ENCODE measurements at regions of chr18 and their contacts with region 1.

Region 1: DNA sequence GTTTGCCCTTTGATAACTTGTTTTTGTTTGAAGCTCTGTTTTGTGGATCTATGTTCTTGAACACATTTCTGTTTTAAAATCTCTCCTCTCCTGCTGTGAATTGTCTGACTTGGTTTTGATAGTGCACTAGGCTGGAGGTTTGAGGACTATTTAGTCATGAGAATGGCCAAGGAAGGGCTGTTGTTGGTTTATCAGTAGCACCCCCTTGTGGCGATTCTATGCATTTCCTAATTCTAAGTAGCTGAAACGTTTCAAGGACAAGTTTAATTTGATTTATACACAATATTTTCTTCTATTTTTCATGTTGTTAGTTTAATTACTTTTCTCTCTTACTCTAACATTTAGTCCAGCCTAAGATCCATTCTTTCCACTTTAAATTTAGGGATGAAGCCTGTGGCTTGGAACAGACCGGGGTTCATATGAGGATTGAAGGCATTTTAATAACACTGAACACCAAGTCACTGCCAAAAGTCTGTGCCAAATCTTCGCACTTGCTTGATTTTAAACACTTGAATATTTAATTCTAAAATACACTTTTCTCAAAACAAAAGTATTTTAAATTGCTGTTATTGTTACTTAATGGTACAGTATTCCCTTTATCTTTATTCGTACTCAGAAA is 166.0 kb downstream of the SOCS6 start:
- DNase-seq: peak; percentile 67
- H3K4me3 ChIP-seq: no peak overlapping the region
- H3K27ac ChIP-seq: no peak overlapping the region
- H3K4me1 ChIP-seq: no peaks in the 10 kb centered on the region
- H3K27me3 ChIP-seq: no peaks in the 10 kb centered on the region
- CTCF ChIP-seq: peak; percentile 61 to 76
- POLR2A ChIP-seq: no peak

Region 2: DNA sequence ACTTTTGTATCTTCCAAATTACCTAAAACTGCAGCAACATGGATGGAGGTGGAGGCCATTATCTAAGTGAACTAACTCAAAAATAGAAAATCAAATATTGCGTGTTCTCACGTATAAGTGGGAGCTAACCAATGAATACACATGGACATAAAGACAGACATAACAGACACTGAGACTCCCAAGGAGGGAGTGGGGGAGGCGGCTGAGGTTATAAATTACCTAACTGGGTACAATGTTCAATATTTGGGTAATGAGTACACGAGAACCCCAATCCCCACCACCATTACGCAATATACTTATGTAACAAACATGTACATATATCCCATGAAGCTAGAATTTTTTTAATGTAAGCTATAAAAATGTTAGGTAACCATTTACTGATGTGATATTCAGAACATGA is 369.2 kb before region 1 on chr18:
- CTCF ChIA-PET with region 1: interaction called, 3 read pairs
- POLR2A ChIA-PET with region 1: no interaction called
- dilution Hi-C with region 1: no loop called
- intact Hi-C with region 1: loop called (anchors 5 kb)
- DNase-seq: no peak
- H3K4me3 ChIP-seq: no peak overlapping the region
- H3K27ac ChIP-seq: no peak overlapping the region
- H3K4me1 ChIP-seq: no peaks in the 10 kb centered on the region
- H3K27me3 ChIP-seq: no peaks in the 10 kb centered on the region
- CTCF ChIP-seq: no peak
- POLR2A ChIP-seq: no peak

Region 3: GRCh38 chr18:70172225-70172624 is 282.6 kb before region 1 on chr18:
- CTCF ChIA-PET with region 1: interaction called, 70 read pairs
- POLR2A ChIA-PET with region 1: no interaction called
- dilution Hi-C with region 1: no loop called
- intact Hi-C with region 1: loop called (anchors 1 kb)
- DNase-seq: peak; percentile 27
- H3K4me3 ChIP-seq: no peak overlapping the region
- H3K27ac ChIP-seq: no peak overlapping the region
- H3K4me1 ChIP-seq: no peaks in the 10 kb centered on the region
- H3K27me3 ChIP-seq: no peaks in the 10 kb centered on the region
- CTCF ChIP-seq: peak; percentile 16 to 19
- POLR2A ChIP-seq: no peak

Region 4: GRCh38 chr18:70188113-70188512 is 266.7 kb before region 1 on chr18:
- CTCF ChIA-PET with region 1: interaction called, 75 read pairs
- POLR2A ChIA-PET with region 1: no interaction called
- dilution Hi-C with region 1: no loop called
- intact Hi-C with region 1: no loop called
- DNase-seq: no peak
- H3K4me3 ChIP-seq: no peak overlapping the region
- H3K27ac ChIP-seq: no peak overlapping the region
- H3K4me1 ChIP-seq: peaks cover 4% of the 10 kb centered on the region
- H3K27me3 ChIP-seq: no peaks in the 10 kb centered on the region
- CTCF ChIP-seq: no peak
- POLR2A ChIP-seq: no peak

Region 5: DNA sequence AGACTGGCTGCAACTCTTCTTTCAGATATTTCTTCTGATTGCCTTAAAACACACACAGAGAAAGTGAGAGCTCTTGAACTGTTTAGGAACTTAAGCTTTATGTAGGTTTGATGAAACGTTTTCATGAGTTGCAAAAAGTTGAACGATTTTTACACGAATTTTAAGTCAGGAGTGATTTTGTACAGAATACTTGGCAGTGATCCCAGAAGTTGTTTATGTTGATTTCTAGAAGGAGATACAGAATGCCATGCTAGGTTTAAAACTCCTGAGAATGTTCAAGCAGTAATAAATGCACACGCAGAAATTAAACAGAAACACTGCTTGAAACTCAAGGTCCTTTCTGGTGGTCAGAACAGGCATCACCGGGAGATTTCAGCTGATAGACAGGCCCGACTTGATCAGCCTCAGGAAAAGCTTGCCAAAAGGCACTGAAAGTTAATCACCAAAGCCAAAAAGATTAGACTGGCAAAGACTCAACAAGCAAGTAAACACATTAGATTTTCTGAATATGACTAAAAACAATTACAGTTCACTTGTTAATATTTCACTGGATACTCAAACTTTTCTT is 42.9 kb before region 1 on chr18:
- CTCF ChIA-PET with region 1: no interaction called
- POLR2A ChIA-PET with region 1: no interaction called
- dilution Hi-C with region 1: no loop called
- intact Hi-C with region 1: no loop called
- DNase-seq: no peak
- H3K4me3 ChIP-seq: no peak overlapping the region
- H3K27ac ChIP-seq: no peak overlapping the region
- H3K4me1 ChIP-seq: no peaks in the 10 kb centered on the region
- H3K27me3 ChIP-seq: no peaks in the 10 kb centered on the region
- CTCF ChIP-seq: no peak
- POLR2A ChIP-seq: no peak

Region 6: GRCh38 chr18:70442933-70443332 is 11.9 kb before region 1 on chr18:
- CTCF ChIA-PET with region 1: interaction called, 11 read pairs
- POLR2A ChIA-PET with region 1: no interaction called
- dilution Hi-C with region 1: no loop called
- intact Hi-C with region 1: no loop called
- DNase-seq: no peak
- H3K4me3 ChIP-seq: no peak overlapping the region
- H3K27ac ChIP-seq: no peak overlapping the region
- H3K4me1 ChIP-seq: no peaks in the 10 kb centered on the region
- H3K27me3 ChIP-seq: peaks cover 0 to 3% of the 10 kb centered on the region in 2 experiments
- CTCF ChIP-seq: no peak
- POLR2A ChIP-seq: no peak

Measured in endothelial cell of umbilical vein (primary cell).